ENCODE measurements at regions of chr16 and their contacts with region 1.

Region 1: GRCh38 chr16:75198135-75198600 is 8.8 kb downstream of the CTRB2 start:
- DNase-seq: no peak
- ATAC-seq: no peak
- H3K4me3 Mint-ChIP-seq: no peak overlapping the region
- H3K27ac Mint-ChIP-seq: no peak overlapping the region
- H3K4me1 Mint-ChIP-seq: peaks cover 14% of the 10 kb centered on the region
- H3K27me3 Mint-ChIP-seq: peaks cover 39% of the 10 kb centered on the region
- CTCF ChIP-seq: no peak

Region 2: DNA sequence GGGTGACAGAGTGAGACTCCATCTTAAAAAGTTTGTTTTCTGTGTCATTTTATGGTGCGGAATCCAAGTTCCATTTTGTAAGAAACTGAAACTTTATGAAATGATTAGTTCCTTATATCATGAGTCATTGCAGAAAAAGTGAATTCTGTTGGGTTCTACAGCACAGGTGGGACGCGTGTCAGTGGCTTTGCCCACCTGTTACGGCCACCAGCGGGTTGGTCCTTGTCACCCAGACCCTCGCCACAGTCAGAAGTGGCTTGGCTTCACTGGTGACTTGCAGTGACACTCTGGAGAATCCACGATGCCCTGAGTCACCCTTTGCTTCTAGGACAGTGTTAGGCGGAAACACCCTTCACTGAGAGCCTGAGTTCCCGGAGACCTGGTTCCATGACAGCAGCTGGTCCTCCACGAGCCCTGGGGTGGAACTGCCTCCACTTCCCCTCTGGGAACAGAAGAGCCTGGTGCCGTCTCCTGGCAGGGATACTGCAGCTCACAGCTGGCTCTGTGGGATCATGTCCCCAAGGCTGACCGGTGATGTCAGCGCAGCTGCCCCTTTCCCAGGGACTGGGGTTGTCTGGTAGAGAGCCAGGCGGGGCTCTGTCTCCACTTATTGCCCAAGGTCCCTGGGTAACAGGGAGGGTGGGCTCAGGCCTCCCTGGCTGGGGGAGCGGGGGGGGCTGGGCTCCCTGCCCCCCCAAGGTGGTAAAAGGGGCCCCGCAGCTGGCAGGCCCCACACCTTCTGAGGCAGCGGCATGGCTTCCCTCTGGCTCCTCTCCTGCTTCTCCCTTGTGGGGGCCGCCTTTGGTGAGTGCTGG is 20.3 kb after region 1 on chr16 and contains the start of gene CTRB1:
- CTCF ChIA-PET with region 1: interaction called, 16 read pairs
- POLR2A ChIA-PET with region 1: interaction called, 3 read pairs
- intact Hi-C with region 1: loop called (anchors 2 kb)
- DNase-seq: no peak
- ATAC-seq: peak; percentile 67
- H3K4me3 Mint-ChIP-seq: peak within 1 kb of the TSS; percentile 70
- H3K27ac Mint-ChIP-seq: peak within 1 kb of the TSS; percentile 63
- H3K4me1 Mint-ChIP-seq: peaks cover 11% of the 10 kb centered on the region
- H3K27me3 Mint-ChIP-seq: peaks cover 5% of the 10 kb centered on the region
- CTCF ChIP-seq: no peak
- total RNA-seq, gene CTRB1: not detected in 2 replicates

Region 3: GRCh38 chr16:75379911-75380847 is 182.0 kb after region 1 on chr16:
- CTCF ChIA-PET with region 1: interaction called, 54 read pairs
- POLR2A ChIA-PET with region 1: interaction called, 4 read pairs
- intact Hi-C with region 1: loop called (anchors 1 kb)
- DNase-seq: peak; percentile 37
- ATAC-seq: peak; percentile 97
- H3K4me3 Mint-ChIP-seq: peak overlapping the region; percentile 48
- H3K27ac Mint-ChIP-seq: no peak overlapping the region
- H3K4me1 Mint-ChIP-seq: peaks cover 28% of the 10 kb centered on the region
- H3K27me3 Mint-ChIP-seq: peaks cover 70% of the 10 kb centered on the region
- CTCF ChIP-seq: no peak

Region 4: DNA sequence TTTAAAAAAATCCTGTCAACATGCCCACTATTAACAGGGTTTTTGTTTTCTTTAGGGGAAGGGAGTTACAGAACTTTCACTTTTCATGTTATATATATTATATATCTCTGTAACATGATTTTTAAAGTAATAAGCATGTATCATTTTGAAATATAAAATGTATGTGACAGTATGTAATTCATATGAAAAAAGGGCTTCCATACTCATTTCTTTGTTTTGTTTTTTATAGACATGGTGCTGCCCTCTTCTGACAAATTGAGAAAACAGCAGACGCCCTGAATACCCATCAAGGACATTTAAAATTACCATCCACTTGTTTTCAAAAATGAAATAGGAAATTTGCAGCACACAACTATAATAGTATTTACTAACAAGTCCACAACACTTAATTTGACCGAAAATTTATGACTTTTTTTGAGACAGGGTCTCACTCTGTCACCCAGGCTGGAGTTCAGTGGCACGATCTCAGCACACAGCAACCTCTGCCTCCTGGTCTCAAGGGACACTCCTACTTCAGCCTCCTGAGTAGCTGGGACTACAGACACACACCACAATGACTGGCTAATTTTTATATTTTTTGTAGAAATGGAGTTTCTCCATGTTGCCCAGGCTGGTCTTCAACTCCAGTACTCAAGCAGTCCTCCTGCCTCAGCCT is 204.8 kb after region 1 on chr16:
- CTCF ChIA-PET with region 1: interaction called, 32 read pairs
- POLR2A ChIA-PET with region 1: no interaction called
- intact Hi-C with region 1: loop called (anchors 1 kb)
- DNase-seq: no peak
- ATAC-seq: peak; percentile 50
- H3K4me3 Mint-ChIP-seq: no peak overlapping the region
- H3K27ac Mint-ChIP-seq: no peak overlapping the region
- H3K4me1 Mint-ChIP-seq: no peaks in the 10 kb centered on the region
- H3K27me3 Mint-ChIP-seq: no peaks in the 10 kb centered on the region
- CTCF ChIP-seq: peak; percentile 60

Region 5: DNA sequence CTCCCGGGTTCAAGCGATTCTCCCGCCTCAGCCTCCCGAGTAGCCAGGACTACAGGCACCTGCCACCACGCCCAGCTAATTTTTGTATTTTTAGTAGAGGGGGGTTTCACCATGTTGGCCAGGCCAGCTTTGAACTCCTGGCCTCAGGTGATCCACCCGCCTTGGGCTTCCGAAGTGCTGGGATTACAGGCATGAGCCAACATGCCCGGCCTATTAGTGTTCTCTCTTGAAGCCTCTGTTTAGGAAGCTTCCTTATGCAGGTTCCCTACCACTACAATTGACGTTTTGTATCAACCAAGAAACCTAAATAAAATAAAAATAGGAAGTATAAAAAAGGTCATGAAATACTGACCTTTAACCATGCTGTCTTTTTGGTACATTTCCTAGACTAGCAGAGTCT is 321.7 kb after region 1 on chr16:
- CTCF ChIA-PET with region 1: no interaction called
- POLR2A ChIA-PET with region 1: interaction called, 3 read pairs
- intact Hi-C with region 1: loop called (anchors 1 kb)
- DNase-seq: no peak
- ATAC-seq: no peak
- H3K4me3 Mint-ChIP-seq: no peak overlapping the region
- H3K27ac Mint-ChIP-seq: no peak overlapping the region
- H3K4me1 Mint-ChIP-seq: peaks cover 13% of the 10 kb centered on the region
- H3K27me3 Mint-ChIP-seq: no peaks in the 10 kb centered on the region
- CTCF ChIP-seq: no peak

Region 6: DNA sequence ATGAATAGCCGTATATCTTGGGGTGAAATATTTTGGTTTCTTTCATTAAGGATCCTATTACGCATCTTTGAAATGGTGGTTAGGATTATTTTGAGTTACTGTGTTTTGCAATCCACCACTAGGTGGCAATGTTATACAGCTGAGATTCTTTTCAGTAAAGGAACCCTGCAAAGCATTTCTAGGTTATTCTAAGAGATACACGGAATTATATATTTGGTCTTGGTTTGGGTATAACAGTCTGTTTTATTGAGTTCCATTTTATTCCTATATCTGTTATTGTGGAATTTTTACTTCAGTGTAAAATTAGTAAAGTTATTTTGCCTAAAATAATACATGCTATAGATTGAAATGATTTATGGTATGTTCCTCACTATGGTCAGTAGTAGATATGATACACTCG is 591.1 kb after region 1 on chr16:
- CTCF ChIA-PET with region 1: no interaction called
- POLR2A ChIA-PET with region 1: no interaction called
- intact Hi-C with region 1: no loop called
- DNase-seq: no peak
- ATAC-seq: peak; percentile 40
- H3K4me3 Mint-ChIP-seq: no peak overlapping the region
- H3K27ac Mint-ChIP-seq: no peak overlapping the region
- H3K4me1 Mint-ChIP-seq: no peaks in the 10 kb centered on the region
- H3K27me3 Mint-ChIP-seq: peaks cover 17% of the 10 kb centered on the region
- CTCF ChIP-seq: peak; percentile 66